PC-3 (cell line): ENCODE measurements at regions of chr1 and their contacts with region 1.

Region 1: GRCh38 chr1:97145321-97145956 is 423.9 kb downstream of the PTBP2 start:
- DNase-seq: no peak
- ATAC-seq: peak; percentile 47
- H3K4me3 ChIP-seq: no peak overlapping the region
- H3K27ac ChIP-seq: 0 out of 2 replicates have a peak overlapping the region, but pooled peaks have one; percentile 56
- H3K4me1 ChIP-seq: peaks cover 24% of the 10 kb centered on the region
- H3K27me3 ChIP-seq: no peaks in the 10 kb centered on the region
- CTCF ChIP-seq: no peak

Region 2: DNA sequence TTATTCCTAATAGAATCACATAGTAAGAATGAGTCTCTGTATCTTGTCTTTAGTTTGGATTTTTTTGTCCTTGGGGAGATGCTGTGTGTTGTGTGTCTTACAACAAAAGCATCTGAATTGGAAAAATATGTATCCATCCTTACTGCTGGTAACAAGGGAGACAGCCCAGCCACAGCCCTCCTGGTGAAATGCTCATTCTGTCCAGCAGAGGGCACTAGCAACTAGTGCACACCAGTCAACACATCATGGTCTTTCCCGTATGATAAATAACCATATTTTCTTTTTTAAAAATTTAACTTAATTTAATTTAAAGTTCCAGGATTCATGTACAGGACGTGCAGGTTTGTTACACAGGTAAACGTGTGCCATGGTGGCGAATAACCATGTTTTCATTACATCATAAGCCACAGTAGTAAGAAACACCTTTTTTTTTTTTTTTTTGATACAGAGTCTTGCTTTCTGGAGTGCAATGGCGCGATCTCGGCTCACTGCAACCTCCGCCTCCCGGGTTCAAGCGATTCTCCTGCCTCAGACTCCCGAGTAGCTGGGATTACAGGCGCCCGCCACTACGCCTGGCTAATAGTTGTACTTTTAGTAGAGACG is 178.8 kb before region 1 on chr1:
- CTCF ChIA-PET with region 1: no interaction called
- POLR2A ChIA-PET with region 1: no interaction called
- intact Hi-C with region 1: loop called (anchors 5 kb)
- DNase-seq: peak; percentile 86
- ATAC-seq: peak; percentile 88
- H3K4me3 ChIP-seq: peak overlapping the region; percentile 68
- H3K27ac ChIP-seq: no peak overlapping the region
- H3K4me1 ChIP-seq: peaks cover 14% of the 10 kb centered on the region
- H3K27me3 ChIP-seq: no peaks in the 10 kb centered on the region
- CTCF ChIP-seq: peak; percentile 83

Region 3: GRCh38 chr1:97070376-97070775 is 75.1 kb before region 1 on chr1:
- CTCF ChIA-PET with region 1: no interaction called
- POLR2A ChIA-PET with region 1: no interaction called
- intact Hi-C with region 1: loop called (anchors 5 kb)
- DNase-seq: peak; percentile 18
- ATAC-seq: no peak
- H3K4me3 ChIP-seq: no peak overlapping the region
- H3K27ac ChIP-seq: no peak overlapping the region
- H3K4me1 ChIP-seq: peaks cover 13% of the 10 kb centered on the region
- H3K27me3 ChIP-seq: no peaks in the 10 kb centered on the region
- CTCF ChIP-seq: no peak

Region 4: GRCh38 chr1:97192872-97193572 is 47.6 kb after region 1 on chr1:
- CTCF ChIA-PET with region 1: no interaction called
- POLR2A ChIA-PET with region 1: no interaction called
- intact Hi-C with region 1: loop called (anchors 2 kb)
- DNase-seq: peak; percentile 98
- ATAC-seq: peak; percentile 94
- H3K4me3 ChIP-seq: peak overlapping the region; percentile 21; the same call in 1 of the 2 replicates
- H3K27ac ChIP-seq: peak overlapping the region; percentile 55
- H3K4me1 ChIP-seq: peaks cover 37% of the 10 kb centered on the region
- H3K27me3 ChIP-seq: no peaks in the 10 kb centered on the region
- CTCF ChIP-seq: peak; percentile 55

Region 5: DNA sequence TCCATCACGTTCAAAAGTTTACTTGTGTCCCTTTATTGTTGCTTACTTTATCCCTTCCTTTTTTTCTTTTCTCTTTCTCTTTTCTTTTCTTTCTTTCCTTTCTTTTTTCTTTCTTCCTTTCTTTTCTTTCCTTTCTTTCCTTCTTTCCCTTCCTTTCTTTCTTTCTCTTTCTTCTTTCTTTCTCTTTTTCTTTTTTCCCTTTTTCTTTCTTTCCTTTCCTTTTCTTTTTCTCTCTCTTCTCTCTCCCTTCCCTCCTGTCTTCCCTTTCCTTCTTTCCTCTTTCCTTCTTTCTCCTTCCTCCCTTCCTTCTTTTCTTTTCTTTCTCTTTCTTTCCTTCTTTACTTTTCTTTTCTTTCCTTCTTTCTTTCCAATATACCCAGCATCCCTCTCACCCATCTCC is 384.2 kb after region 1 on chr1:
- CTCF ChIA-PET with region 1: no interaction called
- POLR2A ChIA-PET with region 1: no interaction called
- intact Hi-C with region 1: loop called (anchors 5 kb)
- DNase-seq: no peak
- ATAC-seq: no peak
- H3K4me3 ChIP-seq: no peak overlapping the region
- H3K27ac ChIP-seq: no peak overlapping the region
- H3K4me1 ChIP-seq: no peaks in the 10 kb centered on the region
- H3K27me3 ChIP-seq: no peaks in the 10 kb centered on the region
- CTCF ChIP-seq: no peak

Region 6: GRCh38 chr1:98315309-98315708 is 1169.9 kb after region 1 on chr1:
- CTCF ChIA-PET with region 1: no interaction called
- POLR2A ChIA-PET with region 1: interaction called, 14 read pairs
- intact Hi-C with region 1: loop called (anchors 10 kb)
- DNase-seq: peak; percentile 78
- ATAC-seq: peak; percentile 37
- H3K4me3 ChIP-seq: no peak overlapping the region
- H3K27ac ChIP-seq: peak overlapping the region; percentile 61
- H3K4me1 ChIP-seq: peaks cover 30% of the 10 kb centered on the region
- H3K27me3 ChIP-seq: no peaks in the 10 kb centered on the region
- CTCF ChIP-seq: no peak

Region 7: GRCh38 chr1:98323906-98324358 is 1178.5 kb after region 1 on chr1:
- CTCF ChIA-PET with region 1: no interaction called
- POLR2A ChIA-PET with region 1: no interaction called
- intact Hi-C with region 1: loop called (anchors 10 kb)
- DNase-seq: peak; percentile 98
- ATAC-seq: peak; percentile 68
- H3K4me3 ChIP-seq: peak overlapping the region; percentile 32
- H3K27ac ChIP-seq: peak overlapping the region; percentile 96
- H3K4me1 ChIP-seq: peaks cover 80% of the 10 kb centered on the region
- H3K27me3 ChIP-seq: no peaks in the 10 kb centered on the region
- CTCF ChIP-seq: no peak